ENCODE measurements at regions of chr10 and their contacts with region 1.

Region 1: GRCh38 chr10:27661514-27662286 is 83.9 kb downstream of the MKX start:
- DNase-seq: no peak
- ATAC-seq: no peak
- H3K4me3 ChIP-seq: no peak overlapping the region
- H3K27ac ChIP-seq: no peak overlapping the region
- H3K4me1 ChIP-seq: no peaks in the 10 kb centered on the region
- H3K27me3 ChIP-seq: peaks cover 3 to 27% of the 10 kb centered on the region in 2 experiments; a peak in 2 of 5 replicates
- CTCF ChIP-seq: no peak
- EP300 ChIP-seq: no peak
- POLR2A ChIP-seq: no peak
- RAD21 ChIP-seq: no peak

Region 2: DNA sequence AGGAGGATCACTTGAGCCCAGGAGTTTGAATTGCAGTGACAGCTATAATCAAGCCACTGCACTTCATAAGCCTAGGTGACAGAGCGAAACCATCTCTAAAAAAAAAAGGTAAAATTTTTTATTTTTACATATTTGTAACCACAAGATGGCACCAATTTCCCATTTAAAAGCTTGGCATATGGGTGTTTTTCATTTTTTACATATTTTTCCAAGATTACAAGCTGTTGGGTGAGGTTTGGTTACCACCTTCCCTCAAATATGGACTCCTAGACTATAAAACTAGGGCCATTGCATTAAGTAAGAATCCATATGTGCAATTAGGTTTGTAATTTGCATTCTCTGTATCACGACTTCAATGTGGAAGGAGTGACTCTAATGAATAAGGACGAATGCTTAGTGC is 291.8 kb before region 1 on chr10:
- CTCF ChIA-PET with region 1: interaction called, 3 read pairs
- POLR2A ChIA-PET with region 1: no interaction called
- in situ Hi-C with region 1: no loop called
- intact Hi-C with region 1: loop called (anchors 2 kb)
- DNase-seq: no peak
- ATAC-seq: no peak
- H3K4me3 ChIP-seq: no peak overlapping the region
- H3K27ac ChIP-seq: no peak overlapping the region
- H3K4me1 ChIP-seq: no peaks in the 10 kb centered on the region
- H3K27me3 ChIP-seq: peaks cover 0 to 12% of the 10 kb centered on the region in 2 experiments; a peak in 2 of 5 replicates
- CTCF ChIP-seq: peak; percentile 25; the same call in 1 of the 2 replicates
- EP300 ChIP-seq: no peak
- POLR2A ChIP-seq: no peak
- RAD21 ChIP-seq: no peak

Region 3: GRCh38 chr10:27446091-27446918 is 215.4 kb before region 1 on chr10:
- CTCF ChIA-PET with region 1: interaction called, 7 read pairs
- POLR2A ChIA-PET with region 1: no interaction called
- in situ Hi-C with region 1: loop called (anchors 10 kb)
- intact Hi-C with region 1: loop called (anchors 2 kb)
- DNase-seq: peak; percentile 3
- ATAC-seq: no peak
- H3K4me3 ChIP-seq: no peak overlapping the region
- H3K27ac ChIP-seq: no peak overlapping the region
- H3K4me1 ChIP-seq: no peaks in the 10 kb centered on the region
- H3K27me3 ChIP-seq: 0 out of 5 replicates have a peak, but pooled peaks cover 0 to 4% of the 10 kb centered on the region in 2 experiments
- CTCF ChIP-seq: peak; percentile 48
- EP300 ChIP-seq: no peak
- POLR2A ChIP-seq: no peak
- RAD21 ChIP-seq: no peak

Region 4: DNA sequence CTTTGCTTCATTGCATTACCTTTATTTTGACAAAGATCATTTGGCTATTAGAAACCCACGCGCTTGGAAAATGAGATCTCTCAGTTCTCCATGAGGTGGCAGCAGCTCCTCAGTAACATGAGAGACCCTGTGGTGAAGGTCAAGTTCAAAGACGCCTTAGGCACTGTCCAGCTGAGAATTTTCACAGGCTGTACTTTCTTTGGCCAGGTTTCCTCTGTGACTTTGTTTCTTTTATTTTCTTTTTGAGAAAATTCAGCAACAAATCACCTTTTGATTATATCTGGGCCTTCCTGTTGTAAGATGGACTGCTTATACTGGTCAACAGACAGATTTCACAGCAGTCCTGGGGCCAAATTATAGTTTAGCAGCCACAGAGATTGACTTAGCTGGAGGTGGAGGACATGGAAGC is 103.1 kb before region 1 on chr10:
- CTCF ChIA-PET with region 1: interaction called, 3 read pairs
- POLR2A ChIA-PET with region 1: no interaction called
- in situ Hi-C with region 1: loop called (anchors 5 kb)
- intact Hi-C with region 1: loop called (anchors 1 kb)
- DNase-seq: peak; percentile 68
- ATAC-seq: peak; percentile 69
- H3K4me3 ChIP-seq: no peak overlapping the region
- H3K27ac ChIP-seq: no peak overlapping the region
- H3K4me1 ChIP-seq: no peaks in the 10 kb centered on the region
- H3K27me3 ChIP-seq: no peaks in the 10 kb centered on the region
- CTCF ChIP-seq: peak; percentile 81
- EP300 ChIP-seq: no peak
- POLR2A ChIP-seq: no peak
- RAD21 ChIP-seq: peak; percentile 74

Measured in HepG2 (cell line).